AG04449 (cell line): ENCODE measurements at regions of chr2 and their contacts with region 1.

Region 1: GRCh38 chr2:191811807-191812602 is 34.9 kb downstream of the CAVIN2 start:
- DNase-seq: no peak
- H3K4me3 ChIP-seq: no peak overlapping the region
- CTCF ChIP-seq: peak; percentile 76

Region 2: DNA sequence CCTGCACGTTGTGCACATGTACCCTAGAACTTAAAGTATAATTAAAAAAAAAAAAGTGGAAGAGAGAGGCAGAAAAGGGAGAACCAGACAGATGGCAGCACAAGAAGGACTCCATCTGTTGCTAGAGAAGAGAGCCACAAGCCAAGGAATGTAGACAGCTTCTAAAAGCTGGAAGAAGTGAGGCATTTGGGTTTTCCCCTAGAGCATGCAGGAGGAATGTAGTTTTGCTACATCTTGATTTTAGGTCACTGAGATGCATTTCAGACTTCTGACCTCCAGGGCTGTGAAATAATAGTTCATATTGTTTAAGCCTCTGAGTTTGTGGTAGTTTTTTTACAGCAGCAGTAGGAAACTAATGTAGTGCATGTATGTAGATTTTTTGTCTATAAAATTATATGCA is 11.1 kb before region 1 on chr2:
- CTCF ChIA-PET with region 1: interaction called, 17 read pairs
- POLR2A ChIA-PET with region 1: no interaction called
- DNase-seq: no peak
- H3K4me3 ChIP-seq: no peak overlapping the region
- CTCF ChIP-seq: no peak

Region 3: DNA sequence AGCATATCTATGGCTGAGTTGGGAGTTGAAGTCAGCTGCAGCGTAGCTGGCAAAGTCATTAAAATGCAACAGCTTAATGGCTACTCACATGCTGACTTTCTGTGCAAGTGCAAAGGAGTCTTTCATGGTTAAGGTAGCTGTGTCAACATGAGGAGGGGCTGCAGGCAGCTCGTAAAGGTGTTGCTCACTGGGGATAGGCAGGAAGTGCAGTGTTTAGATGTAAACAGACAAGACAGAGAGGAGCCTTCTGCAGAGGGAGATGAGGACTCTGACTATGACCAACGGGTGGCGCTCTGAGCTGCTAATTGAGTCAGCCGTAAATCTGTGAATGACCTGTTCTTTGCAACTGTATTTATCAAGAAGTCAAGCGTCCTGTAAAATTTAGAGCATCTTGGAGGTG is 57.2 kb after region 1 on chr2:
- CTCF ChIA-PET with region 1: interaction called, 40 read pairs
- POLR2A ChIA-PET with region 1: no interaction called
- DNase-seq: no peak
- H3K4me3 ChIP-seq: no peak overlapping the region
- CTCF ChIP-seq: peak; percentile 32

Region 4: DNA sequence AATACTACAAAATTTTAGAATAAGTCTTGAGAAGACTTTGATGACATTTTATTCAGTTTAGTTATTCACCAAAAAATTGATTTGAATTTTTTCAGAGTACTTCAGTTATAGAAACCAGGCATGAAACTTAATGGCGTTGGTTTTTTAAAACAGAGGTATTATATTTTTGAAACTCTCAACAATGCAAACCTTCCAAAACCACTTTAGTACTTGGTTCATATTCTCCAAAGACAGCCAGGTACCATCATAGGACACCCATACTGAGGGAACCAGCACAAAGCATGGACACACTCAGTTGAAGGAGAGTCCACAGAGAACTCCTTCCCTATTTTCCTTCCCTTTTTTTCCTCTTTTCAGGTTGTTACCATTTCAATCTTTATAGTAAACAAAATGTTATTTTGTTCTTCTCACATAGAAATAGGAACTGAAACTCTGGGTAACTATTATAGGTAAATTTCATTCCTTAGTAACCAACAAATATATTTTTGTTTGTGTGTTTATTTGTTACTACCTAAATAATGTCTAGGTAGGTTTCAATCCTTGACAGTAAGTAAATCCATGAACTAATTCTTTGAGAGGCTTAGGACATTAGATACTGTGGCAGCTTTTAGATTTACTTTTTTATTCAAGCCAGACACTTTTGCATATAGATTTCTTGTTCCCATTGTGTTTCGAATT is 286.9 kb after region 1 on chr2:
- CTCF ChIA-PET with region 1: no interaction called
- POLR2A ChIA-PET with region 1: no interaction called
- DNase-seq: no peak
- H3K4me3 ChIP-seq: no peak overlapping the region
- CTCF ChIP-seq: no peak

Region 5: GRCh38 chr2:192206399-192206798 is 394.4 kb after region 1 on chr2:
- CTCF ChIA-PET with region 1: interaction called, 11 read pairs
- POLR2A ChIA-PET with region 1: no interaction called
- DNase-seq: no peak
- H3K4me3 ChIP-seq: no peak overlapping the region
- CTCF ChIP-seq: no peak